B cell (primary cell): ENCODE measurements at regions of chr10 and their contacts with region 1.

Region 1: GRCh38 chr10:90871766-90872647 is at the start of gene RPP30:
- DNase-seq: peak; percentile 86
- ATAC-seq: peak; percentile 97
- H3K4me3 ChIP-seq: peak within 1 kb of the TSS; percentile 72 to 96 (median 92)
- H3K4me3 Mint-ChIP-seq: peak within 1 kb of the TSS; percentile 92
- H3K27ac ChIP-seq: peak within 1 kb of the TSS; percentile 51 to 62
- H3K27ac Mint-ChIP-seq: peak within 1 kb of the TSS; percentile 84
- H3K4me1 ChIP-seq: peaks cover 16 to 18% of the 10 kb centered on the region in 2 donors
- H3K4me1 Mint-ChIP-seq: peaks cover 32% of the 10 kb centered on the region
- H3K27me3 ChIP-seq: peaks cover 0 to 13% (median 7%) of the 10 kb centered on the region in 4 experiments
- H3K27me3 Mint-ChIP-seq: peaks cover 27% of the 10 kb centered on the region
- CTCF ChIP-seq: no peak
- total RNA-seq, gene RPP30: 41.7 and 42.3 TPM in 2 replicates

Region 2: DNA sequence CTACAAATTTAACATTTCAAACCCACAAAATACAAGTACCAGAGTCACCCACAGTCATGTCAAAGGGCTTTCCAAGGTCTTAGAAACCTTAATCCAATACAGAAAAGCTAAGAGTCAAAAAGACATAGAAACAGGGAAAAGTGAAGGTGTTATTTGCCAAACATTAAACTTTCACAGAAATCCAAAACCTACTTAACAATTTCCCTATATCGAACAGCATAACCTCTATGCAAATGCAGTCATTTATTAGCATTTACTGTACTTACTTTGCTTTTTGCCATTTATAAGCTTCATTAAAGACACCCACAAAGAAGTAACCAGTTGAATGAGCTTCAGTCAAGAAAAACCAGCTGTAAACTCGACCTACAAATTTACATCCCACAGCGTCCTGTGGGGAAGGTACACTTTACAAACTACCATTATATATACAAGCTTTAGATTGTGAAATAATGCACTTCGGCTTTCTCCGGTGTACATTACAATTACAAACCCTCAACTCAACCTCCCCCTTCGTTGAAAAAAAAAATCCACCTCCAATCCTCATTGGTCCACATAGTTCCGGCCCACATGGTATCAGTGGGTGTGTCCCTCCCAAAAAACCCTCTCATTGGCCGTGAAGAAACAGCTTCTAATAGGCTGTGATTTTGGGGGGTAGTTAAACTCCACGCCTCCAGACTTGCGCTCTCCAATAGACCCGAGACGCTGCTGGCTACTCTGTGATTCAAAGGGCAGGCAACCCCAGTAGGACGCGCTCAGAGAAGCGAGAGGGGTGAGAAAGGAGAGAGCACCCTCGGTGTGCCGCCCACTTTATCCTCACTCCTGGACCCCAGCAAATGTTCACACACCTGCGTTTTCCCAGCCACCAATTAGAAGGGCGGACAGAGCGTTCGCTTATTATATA is 1228.3 kb before region 1 on chr10:
- CTCF ChIA-PET with region 1: no interaction called
- POLR2A ChIA-PET with region 1: no interaction called
- intact Hi-C with region 1: loop called (anchors 5 kb)
- DNase-seq: peak; percentile 85
- ATAC-seq: peak; percentile 91
- H3K4me3 ChIP-seq: peak overlapping the region; percentile 60 to 78 (median 75)
- H3K4me3 Mint-ChIP-seq: no peak overlapping the region
- H3K27ac ChIP-seq: peak overlapping the region in 1 of 2 donors; percentile 15
- H3K27ac Mint-ChIP-seq: no peak overlapping the region
- H3K4me1 ChIP-seq: peaks cover 12 to 25% of the 10 kb centered on the region in 2 donors
- H3K4me1 Mint-ChIP-seq: peaks cover 14% of the 10 kb centered on the region
- H3K27me3 ChIP-seq: peaks cover 0 to 2% (median 0%) of the 10 kb centered on the region in 4 experiments
- H3K27me3 Mint-ChIP-seq: no peaks in the 10 kb centered on the region
- CTCF ChIP-seq: no peak

Region 3: GRCh38 chr10:90047243-90047729 is 824.7 kb before region 1 on chr10:
- CTCF ChIA-PET with region 1: no interaction called
- POLR2A ChIA-PET with region 1: no interaction called
- intact Hi-C with region 1: loop called (anchors 5 kb)
- DNase-seq: peak; percentile 82
- ATAC-seq: peak; percentile 79
- H3K4me3 ChIP-seq: no peak overlapping the region
- H3K4me3 Mint-ChIP-seq: peak overlapping the region; percentile 49
- H3K27ac ChIP-seq: peak overlapping the region; percentile 30 to 31
- H3K27ac Mint-ChIP-seq: peak overlapping the region; percentile 80
- H3K4me1 ChIP-seq: peaks cover 26 to 36% of the 10 kb centered on the region in 2 donors
- H3K4me1 Mint-ChIP-seq: peaks cover 44% of the 10 kb centered on the region
- H3K27me3 ChIP-seq: peaks cover 0 to 9% (median 2%) of the 10 kb centered on the region in 4 experiments
- H3K27me3 Mint-ChIP-seq: no peaks in the 10 kb centered on the region
- CTCF ChIP-seq: no peak

Region 4: GRCh38 chr10:90751107-90751997 is 120.7 kb before region 1 on chr10:
- CTCF ChIA-PET with region 1: interaction called, 8 read pairs
- POLR2A ChIA-PET with region 1: no interaction called
- intact Hi-C with region 1: loop called (anchors 2 kb)
- DNase-seq: peak; percentile 62
- ATAC-seq: no peak
- H3K4me3 ChIP-seq: no peak overlapping the region
- H3K4me3 Mint-ChIP-seq: no peak overlapping the region
- H3K27ac ChIP-seq: no peak overlapping the region
- H3K27ac Mint-ChIP-seq: no peak overlapping the region
- H3K4me1 ChIP-seq: peaks cover 0 to 6% of the 10 kb centered on the region in 2 donors
- H3K4me1 Mint-ChIP-seq: peaks cover 3% of the 10 kb centered on the region
- H3K27me3 ChIP-seq: peaks cover 0 to 4% (median 0%) of the 10 kb centered on the region in 4 experiments
- H3K27me3 Mint-ChIP-seq: peaks cover 44% of the 10 kb centered on the region
- CTCF ChIP-seq: peak; percentile 77

Region 5: DNA sequence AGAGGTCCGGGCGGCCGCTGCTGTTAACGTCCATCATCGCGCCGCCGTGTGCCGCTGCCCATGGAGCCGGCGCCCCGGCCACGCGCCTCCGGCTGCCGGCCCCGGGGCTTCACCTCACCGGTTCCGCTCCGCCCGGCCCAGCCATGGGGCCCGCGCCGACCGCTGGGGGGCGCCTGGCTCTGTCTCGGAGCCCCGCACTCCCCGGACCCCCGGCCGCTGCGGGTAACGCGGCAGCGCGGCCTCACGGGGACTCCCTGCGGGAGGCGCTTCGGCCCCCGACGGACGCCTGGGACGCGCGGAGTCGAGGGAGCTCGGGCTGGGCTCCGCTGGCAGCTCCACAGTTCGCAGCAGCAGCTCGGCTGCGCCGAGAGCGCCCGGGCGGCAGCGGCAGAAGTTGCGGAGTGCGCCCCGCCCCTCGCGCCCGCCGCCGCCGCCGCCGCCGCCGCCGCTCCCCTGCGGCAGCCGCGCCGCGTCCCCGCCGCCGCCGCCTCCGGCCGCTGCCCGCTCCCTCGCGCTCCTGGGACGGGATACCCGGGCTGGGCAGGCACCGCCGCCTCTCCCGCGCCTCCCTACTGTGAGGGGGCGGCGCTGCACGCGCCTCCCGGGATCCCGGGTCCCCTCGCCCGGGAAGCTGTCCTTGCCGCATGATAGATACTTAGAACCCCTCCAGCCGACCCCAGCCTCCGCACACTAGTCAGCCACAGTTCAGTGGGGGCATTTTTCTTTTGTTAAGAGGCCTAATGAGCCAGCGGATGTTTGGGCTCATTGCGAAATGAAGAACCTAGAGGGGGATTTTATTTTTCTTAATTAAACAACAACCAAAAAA is 14.2 kb before region 1 on chr10 and contains the start of gene HTR7:
- CTCF ChIA-PET with region 1: interaction called, 24 read pairs
- POLR2A ChIA-PET with region 1: no interaction called
- intact Hi-C with region 1: loop called (anchors 1 kb)
- DNase-seq: peak; percentile 84
- ATAC-seq: peak; percentile 90
- H3K4me3 ChIP-seq: peak within 1 kb of the TSS; percentile 21 to 66 (median 62)
- H3K4me3 Mint-ChIP-seq: peak within 1 kb of the TSS; percentile 96
- H3K27ac ChIP-seq: no peak within 1 kb of the TSS
- H3K27ac Mint-ChIP-seq: peak within 1 kb of the TSS; percentile 83
- H3K4me1 ChIP-seq: peaks cover 16 to 17% of the 10 kb centered on the region in 2 donors
- H3K4me1 Mint-ChIP-seq: peaks cover 13% of the 10 kb centered on the region
- H3K27me3 ChIP-seq: peaks cover 0 to 40% (median 39%) of the 10 kb centered on the region in 4 experiments
- H3K27me3 Mint-ChIP-seq: peaks cover 42% of the 10 kb centered on the region
- CTCF ChIP-seq: peak; percentile 78
- total RNA-seq, gene HTR7: not detected in 2 replicates

Region 6: GRCh38 chr10:90887555-90887954 is 15.5 kb after region 1 on chr10:
- CTCF ChIA-PET with region 1: no interaction called
- POLR2A ChIA-PET with region 1: no interaction called
- intact Hi-C with region 1: no loop called
- DNase-seq: no peak
- ATAC-seq: no peak
- H3K4me3 ChIP-seq: no peak overlapping the region
- H3K4me3 Mint-ChIP-seq: no peak overlapping the region
- H3K27ac ChIP-seq: no peak overlapping the region
- H3K27ac Mint-ChIP-seq: no peak overlapping the region
- H3K4me1 ChIP-seq: no peaks in the 10 kb centered on the region
- H3K4me1 Mint-ChIP-seq: no peaks in the 10 kb centered on the region
- H3K27me3 ChIP-seq: no peaks in the 10 kb centered on the region
- H3K27me3 Mint-ChIP-seq: no peaks in the 10 kb centered on the region
- CTCF ChIP-seq: no peak